B cell (primary cell): ENCODE measurements at regions of chr14 and their contacts with region 1.

Region 1: GRCh38 chr14:94689218-94689984 is 77.2 kb downstream of the SERPINA3 start:
- DNase-seq: peak; percentile 26
- ATAC-seq: peak; percentile 47
- H3K4me3 ChIP-seq: no peak overlapping the region
- H3K4me3 Mint-ChIP-seq: no peak overlapping the region
- H3K27ac ChIP-seq: no peak overlapping the region
- H3K27ac Mint-ChIP-seq: no peak overlapping the region
- H3K4me1 ChIP-seq: no peaks in the 10 kb centered on the region
- H3K4me1 Mint-ChIP-seq: no peaks in the 10 kb centered on the region
- H3K27me3 ChIP-seq: peaks cover 0 to 2% (median 0%) of the 10 kb centered on the region in 4 experiments
- H3K27me3 Mint-ChIP-seq: peaks cover 6% of the 10 kb centered on the region
- CTCF ChIP-seq: peak; percentile 73

Region 2: DNA sequence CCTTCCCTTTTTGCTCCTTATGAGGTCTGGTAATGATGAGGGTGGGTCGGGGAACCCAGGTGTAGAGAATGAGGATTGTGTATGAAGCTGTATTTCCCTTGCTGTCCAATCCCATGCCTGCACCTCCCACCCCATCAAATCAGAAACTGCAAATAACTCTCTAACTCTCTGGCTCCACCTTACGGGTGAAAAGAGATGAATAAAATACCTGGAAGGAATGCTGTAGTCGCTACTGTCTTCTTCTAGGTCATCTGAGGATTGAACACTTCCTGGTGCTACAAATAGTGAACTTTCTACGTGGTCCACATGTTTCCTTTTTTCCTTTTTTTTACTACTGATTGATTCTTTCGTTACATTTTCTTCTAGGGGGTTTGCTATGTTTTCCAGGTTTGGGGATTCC is 506.9 kb after region 1 on chr14:
- CTCF ChIA-PET with region 1: no interaction called
- POLR2A ChIA-PET with region 1: no interaction called
- intact Hi-C with region 1: loop called (anchors 5 kb)
- DNase-seq: peak; percentile 32
- ATAC-seq: peak; percentile 31
- H3K4me3 ChIP-seq: no peak overlapping the region
- H3K4me3 Mint-ChIP-seq: no peak overlapping the region
- H3K27ac ChIP-seq: no peak overlapping the region
- H3K27ac Mint-ChIP-seq: no peak overlapping the region
- H3K4me1 ChIP-seq: no peaks in the 10 kb centered on the region
- H3K4me1 Mint-ChIP-seq: peaks cover 2% of the 10 kb centered on the region
- H3K27me3 ChIP-seq: no peaks in the 10 kb centered on the region
- H3K27me3 Mint-ChIP-seq: no peaks in the 10 kb centered on the region
- CTCF ChIP-seq: peak; percentile 43

Region 3: DNA sequence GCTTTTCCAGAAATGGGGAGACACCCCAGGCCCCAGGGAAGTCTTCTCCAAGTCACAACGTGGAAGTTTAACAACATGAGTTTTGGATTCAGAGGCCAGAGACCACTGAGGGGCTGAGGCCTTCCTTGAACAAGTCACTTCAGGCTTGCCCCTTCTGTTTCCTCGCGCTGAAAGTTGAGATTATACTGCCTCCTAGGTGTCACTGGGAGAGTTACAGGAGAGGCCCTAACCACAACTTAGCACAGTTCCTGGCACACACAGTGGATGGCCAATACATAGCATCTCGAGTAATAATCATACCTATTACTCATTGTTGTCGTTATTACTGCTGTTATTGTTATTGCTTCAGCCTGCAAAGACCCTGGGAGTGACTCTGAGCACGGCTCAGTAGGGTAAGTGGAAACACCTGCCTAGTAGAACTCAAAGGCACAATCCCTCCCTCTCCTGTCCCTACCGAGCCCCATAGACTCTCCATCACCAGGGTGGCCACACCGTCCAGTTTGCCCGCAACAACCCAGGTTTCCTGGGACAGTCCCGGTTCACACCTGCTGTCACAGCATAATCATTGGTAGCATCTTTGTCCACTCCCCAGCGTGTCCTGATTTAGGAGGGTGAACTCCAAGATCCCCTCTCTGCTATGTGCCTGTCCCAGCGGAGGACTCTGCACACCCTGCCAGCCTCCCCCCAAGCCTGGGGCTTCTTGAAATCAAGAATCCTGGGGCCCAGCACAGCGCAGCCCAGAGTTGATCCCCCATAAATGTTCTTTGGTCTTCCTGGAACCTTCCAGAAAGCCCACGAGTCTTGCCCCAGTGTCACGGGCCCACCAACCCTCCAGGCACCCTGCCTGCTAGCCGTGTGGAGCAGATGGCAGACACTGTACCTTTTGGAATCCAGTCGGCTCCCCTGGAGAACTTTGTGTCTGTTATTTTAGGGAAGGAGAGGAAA is 742.1 kb after region 1 on chr14:
- CTCF ChIA-PET with region 1: no interaction called
- POLR2A ChIA-PET with region 1: no interaction called
- intact Hi-C with region 1: loop called (anchors 5 kb)
- DNase-seq: peak; percentile 48
- ATAC-seq: no peak
- H3K4me3 ChIP-seq: no peak overlapping the region
- H3K4me3 Mint-ChIP-seq: no peak overlapping the region
- H3K27ac ChIP-seq: no peak overlapping the region
- H3K27ac Mint-ChIP-seq: no peak overlapping the region
- H3K4me1 ChIP-seq: peaks cover 0 to 3% of the 10 kb centered on the region in 2 donors
- H3K4me1 Mint-ChIP-seq: peaks cover 7% of the 10 kb centered on the region
- H3K27me3 ChIP-seq: no peaks in the 10 kb centered on the region
- H3K27me3 Mint-ChIP-seq: no peaks in the 10 kb centered on the region
- CTCF ChIP-seq: peak; percentile 53